ENCODE measurements at regions of chr7 and their contacts with region 1.

Region 1: DNA sequence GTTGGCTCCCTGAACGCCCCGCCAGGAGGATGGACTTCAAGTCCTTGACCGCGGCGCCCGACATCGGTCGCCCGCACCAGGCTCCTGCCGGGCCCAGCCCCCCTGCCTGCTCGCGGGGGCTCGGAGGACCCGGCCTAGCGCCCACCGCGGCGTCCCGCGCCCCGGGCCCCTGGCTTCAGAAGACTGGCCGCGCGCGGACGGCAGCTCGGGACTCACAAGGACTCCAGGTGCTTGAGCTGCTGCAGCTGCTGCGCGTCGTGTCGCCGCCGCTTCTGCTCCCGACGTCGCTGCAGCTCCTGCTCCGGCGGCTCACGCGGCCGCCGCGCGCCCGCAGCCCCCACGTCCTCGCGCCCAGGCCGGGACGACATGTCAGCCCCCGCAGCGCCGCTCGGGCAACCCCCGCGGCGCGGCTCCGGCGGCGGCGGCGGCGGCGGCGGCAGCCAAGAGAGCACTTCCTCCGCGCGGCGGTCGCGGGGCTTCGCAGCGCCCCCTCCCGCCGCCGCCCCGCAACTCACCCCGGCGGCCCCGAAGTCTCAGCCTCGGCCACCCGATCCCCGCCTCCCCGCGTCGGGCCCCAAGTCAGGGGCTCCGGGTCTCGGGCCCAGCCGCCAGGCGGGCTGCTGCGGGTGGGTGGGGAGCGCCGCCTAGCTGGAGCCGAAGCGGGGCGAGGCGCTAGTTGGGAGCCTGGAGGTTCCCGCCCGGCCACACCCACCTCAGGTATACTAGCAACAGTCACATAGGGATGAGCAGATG is at the start of gene RP9:
- DNase-seq: no peak
- H3K4me3 ChIP-seq: peak within 1 kb of the TSS; percentile 80
- H3K27ac ChIP-seq: peak within 1 kb of the TSS; percentile 39
- H3K27me3 ChIP-seq: peaks cover 2% of the 10 kb centered on the region
- CTCF ChIP-seq: peak; percentile 25; the same call in 1 of the 2 replicates
- polyA plus RNA-seq, gene RP9: 18.2 and 23.9 TPM in 2 replicates

Region 2: DNA sequence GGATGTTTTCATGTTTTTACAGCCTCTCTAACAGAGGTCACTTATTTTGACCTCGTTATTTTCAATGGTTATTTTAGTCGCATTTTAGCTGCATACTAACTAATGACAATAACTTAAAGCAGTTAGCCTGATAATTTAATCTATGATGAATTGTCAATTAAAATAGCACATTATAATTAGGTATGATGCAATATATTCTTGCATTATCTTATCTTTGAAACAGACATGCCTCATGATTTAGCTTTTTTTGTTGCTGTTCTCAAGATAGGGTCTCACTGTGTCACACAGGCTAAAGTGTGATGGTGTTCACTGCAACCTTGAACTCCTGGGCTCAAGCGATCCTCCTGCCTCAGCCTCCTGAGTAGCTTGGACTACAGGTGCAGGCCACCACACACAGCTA is 344.0 kb before region 1 on chr7:
- CTCF ChIA-PET with region 1: interaction called, 34 read pairs
- POLR2A ChIA-PET with region 1: no interaction called
- DNase-seq: no peak
- H3K4me3 ChIP-seq: no peak overlapping the region
- H3K27ac ChIP-seq: no peak overlapping the region
- H3K27me3 ChIP-seq: peaks cover 27% of the 10 kb centered on the region
- CTCF ChIP-seq: no peak

Region 3: GRCh38 chr7:32803406-32804141 is 305.6 kb before region 1 on chr7:
- CTCF ChIA-PET with region 1: interaction called, 27 read pairs
- POLR2A ChIA-PET with region 1: no interaction called
- DNase-seq: no peak
- H3K4me3 ChIP-seq: no peak overlapping the region
- H3K27ac ChIP-seq: no peak overlapping the region
- H3K27me3 ChIP-seq: no peaks in the 10 kb centered on the region
- CTCF ChIP-seq: no peak

Region 4: GRCh38 chr7:32891043-32891799 is 218.0 kb before region 1 on chr7 and contains the start of gene KBTBD2:
- CTCF ChIA-PET with region 1: interaction called, 22 read pairs
- POLR2A ChIA-PET with region 1: no interaction called
- DNase-seq: peak; percentile 56
- H3K4me3 ChIP-seq: peak within 1 kb of the TSS; percentile 68
- H3K27ac ChIP-seq: peak within 1 kb of the TSS; percentile 98
- H3K27me3 ChIP-seq: no peaks in the 10 kb centered on the region
- CTCF ChIP-seq: no peak
- polyA plus RNA-seq, gene KBTBD2: 21.9 and 26.1 TPM in 2 replicates

Region 5: DNA sequence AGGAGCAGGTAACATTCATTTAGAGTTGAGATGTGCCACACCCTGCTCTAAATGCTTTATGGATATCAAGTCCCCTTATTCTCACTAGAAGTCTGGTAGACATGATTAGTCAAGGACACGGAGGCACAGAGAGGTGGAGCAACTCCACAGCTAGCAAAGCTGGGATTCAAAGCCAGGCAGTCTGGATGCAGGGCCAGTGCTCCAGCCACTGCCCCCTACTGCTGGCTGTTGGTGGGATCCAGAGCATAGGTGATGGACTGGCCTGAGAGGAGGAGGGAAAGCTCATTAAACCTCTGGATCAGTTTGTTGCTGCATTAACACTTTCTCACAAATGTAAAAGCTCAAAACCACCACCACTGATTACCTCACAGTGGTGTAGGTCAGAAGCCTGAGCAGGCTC is 195.0 kb before region 1 on chr7:
- CTCF ChIA-PET with region 1: no interaction called
- POLR2A ChIA-PET with region 1: no interaction called
- DNase-seq: no peak
- H3K4me3 ChIP-seq: no peak overlapping the region
- H3K27ac ChIP-seq: no peak overlapping the region
- H3K27me3 ChIP-seq: no peaks in the 10 kb centered on the region
- CTCF ChIP-seq: no peak

Region 6: GRCh38 chr7:32957326-32958045 is 151.7 kb before region 1 on chr7 and contains the start of gene FKBP9:
- CTCF ChIA-PET with region 1: interaction called, 22 read pairs
- POLR2A ChIA-PET with region 1: no interaction called
- DNase-seq: no peak
- H3K4me3 ChIP-seq: peak within 1 kb of the TSS; percentile 88
- H3K27ac ChIP-seq: peak within 1 kb of the TSS; percentile 77
- H3K27me3 ChIP-seq: no peaks in the 10 kb centered on the region
- CTCF ChIP-seq: no peak
- polyA plus RNA-seq, gene FKBP9: 177 and 204 TPM in 2 replicates

Measured in AG04450 (cell line).